ENCODE measurements at regions of chr14 and their contacts with region 1.

Region 1: GRCh38 chr14:56474419-56475022 is 105.1 kb upstream of the TMEM260 start:
- DNase-seq: peak; percentile 13
- H3K4me3 ChIP-seq: no peak overlapping the region
- H3K27ac ChIP-seq: no peak overlapping the region
- H3K4me1 ChIP-seq: no peaks in the 10 kb centered on the region
- H3K27me3 ChIP-seq: no peaks in the 10 kb centered on the region
- CTCF ChIP-seq: peak; percentile 76 to 82

Region 2: GRCh38 chr14:55430024-55430690 is 1044.4 kb before region 1 on chr14:
- CTCF ChIA-PET with region 1: no interaction called
- dilution Hi-C with region 1: no loop called
- in situ Hi-C with region 1: loop called (anchors 10 to 25 kb)
- intact Hi-C with region 1: no loop called
- DNase-seq: peak; percentile 87
- H3K4me3 ChIP-seq: no peak overlapping the region
- H3K27ac ChIP-seq: no peak overlapping the region
- H3K4me1 ChIP-seq: peaks cover 15% of the 10 kb centered on the region
- H3K27me3 ChIP-seq: no peaks in the 10 kb centered on the region
- CTCF ChIP-seq: peak; percentile 35 to 65

Region 3: DNA sequence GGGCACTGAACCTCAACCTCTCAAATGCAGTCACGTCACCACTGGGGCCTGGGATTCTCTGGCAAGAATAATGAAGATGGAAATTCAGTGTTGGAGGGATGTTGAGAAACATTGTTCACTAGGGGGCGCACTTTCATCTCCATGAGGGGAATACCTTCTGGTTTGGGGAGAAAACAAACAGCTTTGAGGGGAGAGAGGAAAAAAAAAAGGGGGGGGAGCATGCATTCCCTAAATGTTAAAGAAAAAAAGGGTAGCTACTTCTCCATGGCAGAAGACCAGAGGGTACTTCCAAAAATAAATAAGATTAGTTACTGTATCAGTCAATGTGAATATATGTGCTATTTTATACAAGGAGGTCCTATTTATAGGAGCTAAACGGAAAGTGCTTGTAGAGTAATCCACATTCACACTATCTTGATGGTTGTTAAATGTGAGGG is 1028.3 kb before region 1 on chr14:
- CTCF ChIA-PET with region 1: interaction called, 14 read pairs
- dilution Hi-C with region 1: no loop called
- in situ Hi-C with region 1: loop called in 1 of 2 experiments (anchors 25 kb)
- intact Hi-C with region 1: no loop called
- DNase-seq: peak; percentile 67
- H3K4me3 ChIP-seq: no peak overlapping the region
- H3K27ac ChIP-seq: peak overlapping the region; percentile 56
- H3K4me1 ChIP-seq: peaks cover 33% of the 10 kb centered on the region
- H3K27me3 ChIP-seq: no peaks in the 10 kb centered on the region
- CTCF ChIP-seq: peak; percentile 53 to 74

Region 4: DNA sequence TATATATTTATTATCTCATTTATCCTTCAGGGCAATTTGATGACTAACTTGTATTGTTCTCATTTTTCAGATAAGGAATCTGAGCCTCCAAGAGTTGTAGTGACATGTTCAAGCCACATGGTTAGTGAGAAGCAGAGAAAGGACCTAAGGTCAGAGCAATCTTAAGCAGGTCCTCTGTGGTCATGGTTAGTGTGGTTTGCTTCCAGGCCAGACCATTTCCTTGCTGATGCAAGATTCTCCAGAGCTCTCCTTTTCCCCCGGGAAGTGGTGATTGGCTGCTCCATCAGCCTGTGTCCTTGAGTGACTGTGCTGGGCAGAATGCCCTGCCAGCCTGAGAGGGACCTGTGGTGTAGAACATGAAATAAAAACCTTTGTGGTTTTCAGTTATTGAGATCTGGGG is 753.2 kb before region 1 on chr14:
- CTCF ChIA-PET with region 1: interaction called, 13 read pairs
- dilution Hi-C with region 1: no loop called
- in situ Hi-C with region 1: loop called in 1 of 2 experiments (anchors 25 kb)
- intact Hi-C with region 1: no loop called
- DNase-seq: peak; percentile 92
- H3K4me3 ChIP-seq: no peak overlapping the region
- H3K27ac ChIP-seq: no peak overlapping the region
- H3K4me1 ChIP-seq: peaks cover 7% of the 10 kb centered on the region
- H3K27me3 ChIP-seq: peaks cover 19% of the 10 kb centered on the region
- CTCF ChIP-seq: peak; percentile 5 to 20

Region 5: GRCh38 chr14:55864890-55865655 is 609.4 kb before region 1 on chr14:
- CTCF ChIA-PET with region 1: no interaction called
- dilution Hi-C with region 1: no loop called
- in situ Hi-C with region 1: no loop called
- intact Hi-C with region 1: loop called (anchors 5 kb)
- DNase-seq: no peak
- H3K4me3 ChIP-seq: no peak overlapping the region
- H3K27ac ChIP-seq: no peak overlapping the region
- H3K4me1 ChIP-seq: peaks cover 10% of the 10 kb centered on the region
- H3K27me3 ChIP-seq: no peaks in the 10 kb centered on the region
- CTCF ChIP-seq: peak in 1 of 2 donors; percentile 33

Region 6: GRCh38 chr14:56129933-56130332 is 344.6 kb before region 1 on chr14:
- CTCF ChIA-PET with region 1: no interaction called
- dilution Hi-C with region 1: no loop called
- in situ Hi-C with region 1: no loop called
- intact Hi-C with region 1: no loop called
- DNase-seq: no peak
- H3K4me3 ChIP-seq: no peak overlapping the region
- H3K27ac ChIP-seq: no peak overlapping the region
- H3K4me1 ChIP-seq: no peaks in the 10 kb centered on the region
- H3K27me3 ChIP-seq: peaks cover 4% of the 10 kb centered on the region
- CTCF ChIP-seq: no peak

Region 7: DNA sequence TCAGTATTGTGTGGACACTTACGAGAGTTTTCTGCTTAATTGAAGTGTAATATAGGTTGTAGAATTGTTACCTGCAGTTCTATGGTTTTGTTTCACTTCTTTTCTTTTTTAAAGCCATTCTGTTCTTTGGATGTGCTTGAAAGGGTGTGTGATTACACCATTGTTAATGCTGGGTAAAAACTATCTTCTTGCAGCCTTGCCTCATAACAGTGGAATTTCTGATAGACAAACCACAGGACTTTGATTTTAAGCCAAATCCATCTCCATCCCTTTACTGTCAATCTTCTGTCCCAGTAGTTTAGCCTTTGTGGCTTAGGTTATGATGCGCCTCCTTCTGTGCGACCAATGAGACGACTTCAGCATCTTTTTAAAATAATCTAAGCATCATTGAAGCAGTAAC is 174.0 kb before region 1 on chr14:
- CTCF ChIA-PET with region 1: interaction called, 25 read pairs
- dilution Hi-C with region 1: no loop called
- in situ Hi-C with region 1: no loop called
- intact Hi-C with region 1: no loop called
- DNase-seq: no peak
- H3K4me3 ChIP-seq: no peak overlapping the region
- H3K27ac ChIP-seq: no peak overlapping the region
- H3K4me1 ChIP-seq: no peaks in the 10 kb centered on the region
- H3K27me3 ChIP-seq: no peaks in the 10 kb centered on the region
- CTCF ChIP-seq: no peak

Region 8: GRCh38 chr14:56808383-56809269 is 334.1 kb after region 1 on chr14:
- CTCF ChIA-PET with region 1: no interaction called
- dilution Hi-C with region 1: no loop called
- in situ Hi-C with region 1: no loop called
- intact Hi-C with region 1: no loop called
- DNase-seq: no peak
- H3K4me3 ChIP-seq: no peak overlapping the region
- H3K27ac ChIP-seq: no peak overlapping the region
- H3K4me1 ChIP-seq: no peaks in the 10 kb centered on the region
- H3K27me3 ChIP-seq: peaks cover 76% of the 10 kb centered on the region
- CTCF ChIP-seq: no peak

Region 9: GRCh38 chr14:56855891-56856461 is 381.5 kb after region 1 on chr14:
- CTCF ChIA-PET with region 1: no interaction called
- dilution Hi-C with region 1: no loop called
- in situ Hi-C with region 1: no loop called
- intact Hi-C with region 1: no loop called
- DNase-seq: no peak
- H3K4me3 ChIP-seq: no peak overlapping the region
- H3K27ac ChIP-seq: no peak overlapping the region
- H3K4me1 ChIP-seq: no peaks in the 10 kb centered on the region
- H3K27me3 ChIP-seq: peaks cover 3% of the 10 kb centered on the region
- CTCF ChIP-seq: no peak

Measured in mammary epithelial cell (primary cell).